Activated CD4-positive, alpha-beta memory T cell treated with anti-CD3 and anti-CD28 coated beads, Interleukin-2, amount 10 ng/mL, durations not matched to agents 7 days and 5 days (primary cell): ENCODE measurements at regions of chr1 and their contacts with region 1.

Region 1: GRCh38 chr1:35505908-35506798 is 51.0 kb downstream of the KIAA0319L start:
- DNase-seq: peak; percentile 80
- H3K4me3 Mint-ChIP-seq: peak overlapping the region; percentile 45
- H3K27ac Mint-ChIP-seq: peak overlapping the region; percentile 93
- H3K4me1 Mint-ChIP-seq: peaks cover 52% of the 10 kb centered on the region
- H3K27me3 Mint-ChIP-seq: peaks cover 4% of the 10 kb centered on the region

Region 2: GRCh38 chr1:35401049-35401448 is 105.1 kb before region 1 on chr1:
- CTCF ChIA-PET with region 1: no interaction called
- POLR2A ChIA-PET with region 1: no interaction called
- DNase-seq: no peak
- H3K4me3 Mint-ChIP-seq: no peak overlapping the region
- H3K27ac Mint-ChIP-seq: no peak overlapping the region
- H3K4me1 Mint-ChIP-seq: peaks cover 2% of the 10 kb centered on the region
- H3K27me3 Mint-ChIP-seq: no peaks in the 10 kb centered on the region

Region 3: DNA sequence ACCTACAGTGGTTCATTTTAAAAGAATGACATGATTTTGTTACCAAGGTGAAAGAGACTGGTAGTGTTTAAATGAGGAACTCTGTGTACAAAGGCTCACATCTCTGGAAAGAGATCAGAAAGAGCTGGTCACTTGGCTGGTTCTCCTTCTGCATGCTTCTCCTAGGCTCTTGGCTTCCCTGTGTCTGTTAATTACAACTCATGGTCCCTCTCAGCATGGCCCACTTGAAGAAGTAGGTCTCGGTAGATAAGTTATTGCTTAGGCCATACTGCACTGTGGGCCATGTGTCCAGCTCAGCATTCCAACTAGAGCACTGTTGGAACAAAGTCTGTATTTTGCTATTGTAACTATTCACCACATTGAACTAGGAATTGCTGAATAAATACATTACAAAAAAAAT is 40.0 kb before region 1 on chr1:
- CTCF ChIA-PET with region 1: no interaction called
- POLR2A ChIA-PET with region 1: no interaction called
- DNase-seq: no peak
- H3K4me3 Mint-ChIP-seq: no peak overlapping the region
- H3K27ac Mint-ChIP-seq: no peak overlapping the region
- H3K4me1 Mint-ChIP-seq: peaks cover 24% of the 10 kb centered on the region
- H3K27me3 Mint-ChIP-seq: no peaks in the 10 kb centered on the region

Region 4: DNA sequence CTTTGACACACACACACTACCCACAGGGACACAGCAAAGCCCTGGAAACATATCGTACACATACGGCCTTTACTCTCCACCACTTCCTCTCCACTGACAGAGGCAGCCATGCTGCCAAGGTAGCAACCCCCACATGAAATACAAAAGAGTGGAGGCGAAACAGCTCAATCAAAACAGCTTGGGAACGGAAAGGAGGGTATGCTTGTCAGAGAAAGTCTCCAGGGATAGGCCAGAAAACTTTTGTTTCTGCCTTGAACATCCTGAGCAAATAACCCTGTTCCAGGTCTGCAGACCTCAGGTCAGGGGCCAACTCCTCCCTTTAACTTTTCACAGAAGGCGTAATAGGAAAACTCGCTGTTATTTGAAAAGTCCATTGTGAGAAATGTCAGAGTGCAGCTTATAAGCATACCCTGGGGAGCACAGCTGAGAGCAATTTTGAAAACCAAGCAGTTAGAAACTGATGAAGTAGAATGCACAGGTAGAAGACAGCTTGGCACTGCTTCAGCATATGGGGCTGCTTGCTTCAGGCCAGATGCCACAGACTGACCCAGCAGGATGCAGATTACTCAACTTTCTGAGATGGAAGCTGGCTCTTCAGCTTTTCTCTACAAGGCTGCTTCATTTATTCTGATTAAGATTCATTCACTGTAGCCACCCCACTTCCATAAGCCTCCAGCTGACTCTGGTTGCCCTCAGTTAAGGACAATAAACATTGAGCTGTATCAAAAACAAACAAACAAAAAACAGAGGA is 33.1 kb after region 1 on chr1:
- CTCF ChIA-PET with region 1: interaction called, 4 read pairs
- POLR2A ChIA-PET with region 1: interaction called, 43 read pairs
- DNase-seq: peak; percentile 58
- H3K4me3 Mint-ChIP-seq: peak overlapping the region; percentile 58
- H3K27ac Mint-ChIP-seq: peak overlapping the region; percentile 92
- H3K4me1 Mint-ChIP-seq: peaks cover 45% of the 10 kb centered on the region
- H3K27me3 Mint-ChIP-seq: no peaks in the 10 kb centered on the region